Naive thymus-derived CD4-positive, alpha-beta T cell (primary cell): ENCODE measurements at regions of chr4 and their contacts with region 1.

Region 1: GRCh38 chr4:83124111-83124780 is 9.7 kb upstream of the PLAC8 start:
- DNase-seq: no peak
- ATAC-seq: peak; percentile 68
- H3K4me3 ChIP-seq: no peak overlapping the region
- H3K4me3 Mint-ChIP-seq: peak overlapping the region in 2 of 10 donors; percentile 31 to 37
- H3K27ac ChIP-seq: no peak overlapping the region
- H3K27ac Mint-ChIP-seq: peak overlapping the region in 4 of 9 donors; percentile 5 to 75 (median 54)
- H3K4me1 ChIP-seq: peaks cover 0 to 10% of the 10 kb centered on the region in 2 donors
- H3K4me1 Mint-ChIP-seq: peaks cover 13 to 36% (median 21%) of the 10 kb centered on the region in 7 donors
- H3K27me3 ChIP-seq: no peaks in the 10 kb centered on the region
- H3K27me3 Mint-ChIP-seq: peaks cover 0 to 19% (median 0%) of the 10 kb centered on the region in 5 donors

Region 2: DNA sequence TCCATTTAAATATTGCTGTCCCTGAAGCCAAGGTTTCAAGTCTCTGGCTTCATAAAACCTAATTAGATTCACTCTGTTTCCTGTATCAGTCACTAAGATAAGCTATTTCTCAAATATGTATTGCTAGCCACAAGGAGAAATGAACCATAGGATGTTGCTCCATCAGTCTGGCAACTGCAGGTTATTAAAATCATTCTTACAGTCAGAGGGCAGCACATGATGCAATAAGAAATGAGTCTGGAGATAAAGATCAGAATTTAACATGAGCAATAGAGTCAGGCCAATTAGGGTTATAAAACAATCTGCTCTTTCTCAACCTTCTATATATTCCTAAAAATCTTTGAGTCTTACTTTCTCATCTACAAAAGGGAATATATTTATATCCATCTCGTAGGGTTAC is 1916.4 kb before region 1 on chr4:
- CTCF ChIA-PET with region 1: no interaction called
- POLR2A ChIA-PET with region 1: no interaction called
- intact Hi-C with region 1: no loop called
- DNase-seq: no peak
- ATAC-seq: peak; percentile 31
- H3K4me3 ChIP-seq: no peak overlapping the region
- H3K4me3 Mint-ChIP-seq: no peak overlapping the region
- H3K27ac ChIP-seq: no peak overlapping the region
- H3K27ac Mint-ChIP-seq: no peak overlapping the region
- H3K4me1 ChIP-seq: no peaks in the 10 kb centered on the region
- H3K4me1 Mint-ChIP-seq: no peaks in the 10 kb centered on the region
- H3K27me3 ChIP-seq: no peaks in the 10 kb centered on the region
- H3K27me3 Mint-ChIP-seq: peaks cover 15 to 54% (median 42%) of the 10 kb centered on the region in 5 donors

Region 3: DNA sequence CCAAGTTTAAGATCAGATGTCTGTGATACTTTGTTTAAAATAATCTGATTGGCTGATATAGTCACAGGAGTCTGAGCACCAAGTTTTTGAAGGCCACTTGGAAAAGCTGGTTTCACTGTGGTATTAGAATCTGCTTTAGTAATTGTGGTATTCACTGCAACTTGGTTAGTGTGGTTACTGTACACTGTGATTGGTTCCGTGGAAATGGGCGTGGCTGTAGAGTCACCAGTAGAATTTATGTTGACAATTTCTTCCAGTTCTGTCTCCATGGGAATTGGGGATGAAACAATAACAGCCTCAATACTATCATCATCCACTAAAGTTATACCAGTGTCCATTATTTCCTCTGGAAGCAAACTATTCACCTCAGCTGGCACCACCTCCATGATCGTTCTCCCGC is 139.8 kb before region 1 on chr4:
- CTCF ChIA-PET with region 1: no interaction called
- POLR2A ChIA-PET with region 1: no interaction called
- intact Hi-C with region 1: no loop called
- DNase-seq: no peak
- ATAC-seq: no peak
- H3K4me3 ChIP-seq: no peak overlapping the region
- H3K4me3 Mint-ChIP-seq: no peak overlapping the region
- H3K27ac ChIP-seq: no peak overlapping the region
- H3K27ac Mint-ChIP-seq: peak overlapping the region in 2 of 9 donors; percentile 26 to 70
- H3K4me1 ChIP-seq: peaks cover 0 to under 1% of the 10 kb centered on the region in 2 donors
- H3K4me1 Mint-ChIP-seq: peaks cover 5 to 22% (median 13%) of the 10 kb centered on the region in 7 donors
- H3K27me3 ChIP-seq: no peaks in the 10 kb centered on the region
- H3K27me3 Mint-ChIP-seq: no peaks in the 10 kb centered on the region

Region 4: GRCh38 chr4:83150653-83151330 is 26.5 kb after region 1 on chr4:
- CTCF ChIA-PET with region 1: interaction called, 8 read pairs
- POLR2A ChIA-PET with region 1: interaction called, 3 read pairs
- intact Hi-C with region 1: loop called in 1 of 2 experiments (anchors 2 kb)
- DNase-seq: no peak
- ATAC-seq: no peak
- H3K4me3 ChIP-seq: no peak overlapping the region
- H3K4me3 Mint-ChIP-seq: no peak overlapping the region
- H3K27ac ChIP-seq: no peak overlapping the region
- H3K27ac Mint-ChIP-seq: no peak overlapping the region
- H3K4me1 ChIP-seq: peaks cover 0 to 10% of the 10 kb centered on the region in 2 donors
- H3K4me1 Mint-ChIP-seq: peaks cover 9 to 44% (median 30%) of the 10 kb centered on the region in 7 donors
- H3K27me3 ChIP-seq: no peaks in the 10 kb centered on the region
- H3K27me3 Mint-ChIP-seq: peaks cover 0 to 17% (median 0%) of the 10 kb centered on the region in 5 donors